Activated CD4-positive, alpha-beta memory T cell treated with anti-CD3 and anti-CD28 coated beads for 36 hours (primary cell): ENCODE measurements at regions of chr3 and their contacts with region 1.

Region 1: GRCh38 chr3:44510000-44510368 is 32.5 kb upstream of the ZNF445 start:
- DNase-seq: no peak
- H3K4me3 Mint-ChIP-seq: peak overlapping the region; percentile 89
- H3K27ac Mint-ChIP-seq: peak overlapping the region; percentile 93
- H3K4me1 Mint-ChIP-seq: peaks cover 33% of the 10 kb centered on the region
- H3K27me3 Mint-ChIP-seq: no peaks in the 10 kb centered on the region

Region 2: GRCh38 chr3:43024181-43024885 is 1485.7 kb before region 1 on chr3:
- CTCF ChIA-PET with region 1: no interaction called
- POLR2A ChIA-PET with region 1: no interaction called
- intact Hi-C with region 1: no loop called
- DNase-seq: peak; percentile 70
- H3K4me3 Mint-ChIP-seq: peak overlapping the region; percentile 25
- H3K27ac Mint-ChIP-seq: peak overlapping the region; percentile 30
- H3K4me1 Mint-ChIP-seq: peaks cover 58% of the 10 kb centered on the region
- H3K27me3 Mint-ChIP-seq: no peaks in the 10 kb centered on the region

Region 3: DNA sequence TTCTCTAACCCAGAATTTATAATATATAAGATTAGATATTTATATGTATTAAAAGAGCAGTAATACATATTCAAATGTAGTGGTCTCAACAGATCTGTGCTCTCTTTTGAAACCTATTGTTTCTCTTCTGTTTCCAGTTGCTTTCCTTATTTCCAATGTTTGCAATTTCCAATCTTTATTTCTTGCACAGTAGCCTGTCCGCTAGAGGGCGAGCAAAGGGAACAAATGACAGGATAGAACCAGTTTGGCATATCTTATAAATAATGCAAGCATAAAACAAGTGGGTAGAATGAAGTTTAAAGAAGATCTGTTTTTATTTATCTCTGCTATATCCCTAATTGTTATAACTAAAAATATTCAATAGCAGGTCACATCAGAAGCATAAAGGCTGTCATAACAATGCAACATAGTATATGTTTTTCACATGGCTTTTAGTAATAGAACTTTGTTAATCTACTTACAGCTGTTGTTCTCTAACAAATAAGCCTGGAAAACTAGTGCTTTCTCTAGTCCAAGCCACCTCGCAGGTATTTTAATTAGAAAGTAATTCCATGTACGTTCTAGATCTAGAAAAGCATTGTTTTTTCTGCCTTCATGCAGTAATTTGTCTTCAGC is 186.5 kb before region 1 on chr3:
- CTCF ChIA-PET with region 1: interaction called, 4 read pairs
- POLR2A ChIA-PET with region 1: no interaction called
- intact Hi-C with region 1: loop called (anchors 5 kb)
- DNase-seq: peak; percentile 65
- H3K4me3 Mint-ChIP-seq: no peak overlapping the region
- H3K27ac Mint-ChIP-seq: no peak overlapping the region
- H3K4me1 Mint-ChIP-seq: no peaks in the 10 kb centered on the region
- H3K27me3 Mint-ChIP-seq: peaks cover 6% of the 10 kb centered on the region

Region 4: GRCh38 chr3:44439499-44440295 is 70.3 kb before region 1 on chr3:
- CTCF ChIA-PET with region 1: interaction called, 3 read pairs
- POLR2A ChIA-PET with region 1: interaction called, 5 read pairs
- intact Hi-C with region 1: loop called (anchors 1 kb)
- DNase-seq: peak; percentile 91
- H3K4me3 Mint-ChIP-seq: peak overlapping the region; percentile 25
- H3K27ac Mint-ChIP-seq: peak overlapping the region; percentile 90
- H3K4me1 Mint-ChIP-seq: peaks cover 47% of the 10 kb centered on the region
- H3K27me3 Mint-ChIP-seq: no peaks in the 10 kb centered on the region

Region 5: DNA sequence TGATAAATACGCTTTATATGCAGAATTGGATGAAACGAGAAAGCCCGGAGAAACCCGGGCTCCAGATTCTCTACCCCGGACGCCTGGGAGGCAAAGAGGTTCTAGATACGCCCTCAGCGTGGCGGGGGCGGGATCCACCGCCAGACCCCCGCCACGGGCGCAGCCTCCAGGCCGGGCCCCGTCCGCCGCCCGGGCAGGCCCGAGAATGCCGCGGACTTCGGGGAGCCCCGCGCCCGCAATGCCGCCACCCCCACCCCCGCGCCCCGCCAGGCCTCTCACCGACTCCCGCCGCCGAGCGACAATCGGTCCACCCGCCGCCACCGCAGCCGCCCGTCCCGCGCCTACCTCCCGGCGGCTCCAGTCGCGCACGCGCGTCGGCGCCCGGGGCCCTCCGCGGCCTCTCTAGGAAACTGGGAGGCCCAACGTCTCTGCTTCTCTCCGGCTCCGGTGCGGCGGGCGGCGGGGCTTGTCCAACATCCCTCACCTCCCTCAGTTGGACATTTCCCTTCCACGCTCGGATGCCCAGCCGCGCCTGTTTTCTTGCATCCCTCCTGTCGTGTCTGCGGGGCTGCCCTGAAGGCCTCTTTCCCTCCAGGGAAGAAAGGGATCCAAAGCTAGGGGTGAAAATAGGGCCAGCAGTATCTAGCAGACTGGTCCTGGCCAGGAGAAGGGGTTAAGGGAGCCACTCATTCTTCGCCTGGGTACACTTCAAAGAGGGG is 32.5 kb before region 1 on chr3 and contains the start of gene ZNF445:
- CTCF ChIA-PET with region 1: interaction called, 4 read pairs
- POLR2A ChIA-PET with region 1: interaction called, 8 read pairs
- intact Hi-C with region 1: loop called (anchors 1 kb)
- DNase-seq: peak; percentile 83
- H3K4me3 Mint-ChIP-seq: peak within 1 kb of the TSS; percentile 85
- H3K27ac Mint-ChIP-seq: peak within 1 kb of the TSS; percentile 74
- H3K4me1 Mint-ChIP-seq: peaks cover 25% of the 10 kb centered on the region
- H3K27me3 Mint-ChIP-seq: no peaks in the 10 kb centered on the region
- total RNA-seq, gene ZNF445: 16.6 to 18.7 TPM

Region 6: GRCh38 chr3:44624749-44625480 is 114.9 kb after region 1 on chr3 and contains the start of gene ZNF197:
- CTCF ChIA-PET with region 1: no interaction called
- POLR2A ChIA-PET with region 1: no interaction called
- intact Hi-C with region 1: loop called (anchors 2 kb)
- DNase-seq: peak; percentile 78
- H3K4me3 Mint-ChIP-seq: peak within 1 kb of the TSS; percentile 80
- H3K27ac Mint-ChIP-seq: peak within 1 kb of the TSS; percentile 47
- H3K4me1 Mint-ChIP-seq: peaks cover 20% of the 10 kb centered on the region
- H3K27me3 Mint-ChIP-seq: no peaks in the 10 kb centered on the region
- total RNA-seq, gene ZNF197: 9.1 to 9.9 TPM

Region 7: GRCh38 chr3:44825264-44825925 is 315.4 kb after region 1 on chr3:
- CTCF ChIA-PET with region 1: no interaction called
- POLR2A ChIA-PET with region 1: no interaction called
- intact Hi-C with region 1: no loop called
- DNase-seq: no peak
- H3K4me3 Mint-ChIP-seq: no peak overlapping the region
- H3K27ac Mint-ChIP-seq: no peak overlapping the region
- H3K4me1 Mint-ChIP-seq: no peaks in the 10 kb centered on the region
- H3K27me3 Mint-ChIP-seq: no peaks in the 10 kb centered on the region

Region 8: GRCh38 chr3:44976002-44976815 is 466.2 kb after region 1 on chr3 and contains the starts of genes EXOSC7 and ZDHHC3:
- CTCF ChIA-PET with region 1: no interaction called
- POLR2A ChIA-PET with region 1: interaction called, 10 read pairs
- intact Hi-C with region 1: no loop called
- DNase-seq: peak; percentile 91
- H3K4me3 Mint-ChIP-seq: peak within 1 kb of the TSS; percentile 98
- H3K27ac Mint-ChIP-seq: peak within 1 kb of the TSS; percentile 85
- H3K4me1 Mint-ChIP-seq: peaks cover 56% of the 10 kb centered on the region
- H3K27me3 Mint-ChIP-seq: no peaks in the 10 kb centered on the region
- total RNA-seq, gene EXOSC7: 55.7 to 62.2 TPM
- total RNA-seq, gene ZDHHC3: 26.9 to 34.8 TPM

Region 9: GRCh38 chr3:45021148-45021923 is 511.4 kb after region 1 on chr3:
- CTCF ChIA-PET with region 1: no interaction called
- POLR2A ChIA-PET with region 1: no interaction called
- intact Hi-C with region 1: no loop called
- DNase-seq: no peak
- H3K4me3 Mint-ChIP-seq: no peak overlapping the region
- H3K27ac Mint-ChIP-seq: peak overlapping the region; percentile 21
- H3K4me1 Mint-ChIP-seq: peaks cover 13% of the 10 kb centered on the region
- H3K27me3 Mint-ChIP-seq: no peaks in the 10 kb centered on the region